Common myeloid progenitor, CD34-positive (primary cell): ENCODE measurements at regions of chr2 and their contacts with region 1.

Region 1: GRCh38 chr2:199985625-199986207 is 30.3 kb downstream of the MAIP1 start:
- DNase-seq: peak; percentile 74 to 84 (median 83)
- H3K4me3 ChIP-seq: no peak overlapping the region
- H3K27ac ChIP-seq: no peak overlapping the region
- H3K4me1 ChIP-seq: peaks cover 6 to 12% (median 10%) of the 10 kb centered on the region in 4 experiments
- H3K27me3 ChIP-seq: no peaks in the 10 kb centered on the region

Region 2: GRCh38 chr2:199922856-199923255 is 62.9 kb before region 1 on chr2:
- CTCF ChIA-PET with region 1: no interaction called
- POLR2A ChIA-PET with region 1: no interaction called
- DNase-seq: no peak
- H3K4me3 ChIP-seq: no peak overlapping the region
- H3K27ac ChIP-seq: no peak overlapping the region
- H3K4me1 ChIP-seq: no peaks in the 10 kb centered on the region
- H3K27me3 ChIP-seq: no peaks in the 10 kb centered on the region

Region 3: DNA sequence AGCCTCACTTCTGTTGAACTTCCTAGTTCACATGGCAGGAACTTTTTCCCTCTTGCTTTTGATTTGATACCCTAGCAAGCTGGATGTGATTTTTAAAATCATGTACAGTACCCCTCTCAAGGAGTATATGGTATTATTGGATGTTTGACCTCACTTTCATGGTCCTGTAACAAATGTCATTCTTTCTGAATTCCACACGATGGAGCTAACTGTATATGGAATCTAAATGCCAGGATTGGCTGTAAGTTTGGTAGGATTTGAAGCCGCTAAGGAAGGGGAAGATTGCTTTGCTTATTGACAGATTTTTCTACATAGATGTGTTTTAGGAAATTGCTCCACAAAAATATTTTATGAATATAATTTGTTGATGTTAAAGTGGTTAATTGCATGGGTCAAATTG is 12.0 kb before region 1 on chr2:
- CTCF ChIA-PET with region 1: interaction called, 10 read pairs
- POLR2A ChIA-PET with region 1: no interaction called
- DNase-seq: peak; percentile 32 to 62 (median 58)
- H3K4me3 ChIP-seq: no peak overlapping the region
- H3K27ac ChIP-seq: no peak overlapping the region
- H3K4me1 ChIP-seq: no peaks in the 10 kb centered on the region
- H3K27me3 ChIP-seq: no peaks in the 10 kb centered on the region